Breast epithelium (tissue), 4 donors: ENCODE measurements at regions of chr3 and their contacts with region 1.

Region 1: DNA sequence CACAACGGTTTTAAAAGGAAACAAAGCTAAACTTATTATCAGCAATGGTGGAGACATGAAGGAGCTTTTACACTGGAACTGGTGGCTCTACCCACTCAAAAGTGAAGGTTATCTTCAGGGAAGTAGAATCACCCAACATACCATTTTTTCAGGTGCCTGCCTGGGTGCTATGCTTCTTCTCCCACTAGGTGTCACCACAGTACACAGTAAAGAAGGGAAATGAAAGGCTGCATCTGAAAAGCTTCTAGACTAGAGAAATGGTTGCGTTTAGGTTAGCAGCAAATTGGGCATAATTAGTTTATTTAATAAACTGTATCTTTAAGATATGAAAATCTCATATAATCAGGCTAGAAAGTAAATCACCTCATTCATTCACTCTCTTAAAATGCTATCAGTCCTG is 47.0 kb upstream of the SELENOK start:
- DNase-seq: no peak
- H3K4me3 ChIP-seq: no peak overlapping the region
- H3K27ac ChIP-seq: no peak overlapping the region
- H3K4me1 ChIP-seq: no peaks in the 10 kb centered on the region
- H3K27me3 ChIP-seq: no peaks in the 10 kb centered on the region
- CTCF ChIP-seq: peak in 2 of 3 donors; percentile 65 to 79
- POLR2A ChIP-seq: no peak

Region 2: GRCh38 chr3:53709860-53710674 is 228.6 kb before region 1 on chr3:
- intact Hi-C with region 1: no loop called
- DNase-seq: peak; percentile 47 to 71
- H3K4me3 ChIP-seq: no peak overlapping the region
- H3K27ac ChIP-seq: no peak overlapping the region
- H3K4me1 ChIP-seq: no peaks in the 10 kb centered on the region
- H3K27me3 ChIP-seq: no peaks in the 10 kb centered on the region
- CTCF ChIP-seq: peak; percentile 61 to 86 (median 72)
- POLR2A ChIP-seq: no peak

Region 3: GRCh38 chr3:53969086-53969485 is 30.4 kb after region 1 on chr3:
- intact Hi-C with region 1: loop called (anchors 1 kb)
- DNase-seq: no peak
- H3K4me3 ChIP-seq: no peak overlapping the region
- H3K27ac ChIP-seq: no peak overlapping the region
- H3K4me1 ChIP-seq: no peaks in the 10 kb centered on the region
- H3K27me3 ChIP-seq: no peaks in the 10 kb centered on the region
- CTCF ChIP-seq: no peak
- POLR2A ChIP-seq: no peak